RWPE1 (cell line): ENCODE measurements at regions of chr2 and their contacts with region 1.

Region 1: DNA sequence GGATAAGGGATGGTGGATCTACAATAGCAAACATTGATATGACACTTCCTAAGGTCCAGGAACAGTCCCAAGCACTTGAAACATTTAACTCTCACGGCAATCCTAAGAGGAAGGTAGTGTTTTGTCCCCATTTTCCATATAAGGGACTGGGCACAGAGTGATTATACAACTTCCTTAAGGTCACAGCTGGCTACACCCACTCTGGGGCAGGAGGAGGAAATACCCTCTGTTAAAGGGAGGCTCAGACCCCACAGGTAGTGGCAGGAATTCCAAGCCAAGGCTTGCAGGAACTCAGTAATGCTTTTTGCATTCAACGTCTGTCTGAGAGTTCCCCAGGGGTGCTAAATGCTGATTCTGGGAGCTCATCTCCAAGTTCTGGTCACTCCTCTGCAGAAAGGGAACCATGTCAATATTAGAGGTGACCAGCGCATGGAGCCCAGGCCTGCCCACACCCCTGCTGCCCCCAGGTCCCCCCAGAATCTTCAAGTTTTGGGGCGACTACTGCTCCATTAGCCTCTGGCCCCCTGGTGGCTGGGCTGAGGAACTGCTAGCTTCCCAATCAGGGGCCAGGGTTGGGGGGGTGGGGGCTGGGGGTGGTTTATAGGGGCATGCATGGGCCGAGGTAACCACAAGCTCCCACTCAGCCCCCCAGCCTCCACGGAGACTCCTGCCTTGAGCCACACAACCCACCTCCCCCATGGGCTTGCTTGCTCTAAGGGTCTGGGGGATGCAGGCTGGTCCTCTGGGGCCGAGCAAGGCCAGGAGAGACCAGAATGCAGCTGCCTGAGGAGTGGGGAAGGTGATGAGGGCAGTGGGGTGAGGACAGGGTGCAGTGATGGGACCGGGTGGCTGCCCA is 11.1 kb downstream of the OBSL1 start:
- DNase-seq: peak; percentile 48
- H3K27ac ChIP-seq: no peak overlapping the region
- CTCF ChIP-seq: peak; percentile 89

Region 2: DNA sequence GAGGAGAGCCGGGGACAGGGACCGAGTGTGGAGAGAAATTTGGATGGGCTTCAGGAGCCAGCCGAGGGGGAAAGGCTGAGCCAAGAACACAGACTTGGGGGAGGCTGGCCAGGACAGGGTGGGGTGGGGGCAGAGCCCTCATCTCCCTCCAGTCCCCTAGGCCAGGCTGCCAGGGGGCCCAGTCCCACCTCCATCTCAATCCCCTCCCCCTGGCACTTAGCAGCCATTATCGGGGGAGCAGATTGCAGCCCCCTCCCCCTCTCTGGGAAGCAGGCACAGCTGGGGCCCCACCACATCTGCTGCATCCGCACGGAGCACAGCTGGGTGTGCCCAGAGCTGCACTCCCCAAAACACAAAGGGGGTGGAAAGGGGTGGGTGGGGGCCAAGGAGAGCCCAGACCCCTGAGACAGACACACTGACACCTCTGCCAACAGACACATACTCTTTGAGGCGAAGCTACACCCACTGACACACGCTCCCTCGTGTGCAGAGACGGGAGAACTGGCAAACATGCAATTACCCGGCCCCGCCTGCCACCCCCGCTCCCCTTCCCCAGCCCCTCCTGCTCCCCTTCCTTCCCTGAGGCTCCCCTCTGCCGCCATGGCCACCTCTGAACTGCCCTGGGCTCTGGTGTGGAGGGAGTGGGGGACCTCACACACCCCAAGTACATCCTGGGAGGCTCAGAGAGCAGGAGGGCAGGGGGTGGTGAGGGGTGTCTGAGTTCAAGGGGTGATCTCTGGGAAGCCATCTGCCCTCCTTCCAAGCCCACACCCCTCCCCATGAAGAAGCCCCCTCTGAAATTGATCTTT is 51.1 kb before region 1 on chr2:
- CTCF ChIA-PET with region 1: no interaction called
- POLR2A ChIA-PET with region 1: no interaction called
- DNase-seq: no peak
- H3K27ac ChIP-seq: no peak overlapping the region
- CTCF ChIP-seq: no peak

Region 3: GRCh38 chr2:219571311-219572236 is 11.3 kb after region 1 on chr2 and contains the start of gene OBSL1:
- CTCF ChIA-PET with region 1: interaction called, 21 read pairs
- POLR2A ChIA-PET with region 1: no interaction called
- DNase-seq: peak; percentile 56
- H3K27ac ChIP-seq: peak within 1 kb of the TSS; percentile 77
- CTCF ChIP-seq: no peak